Activated B cell treated with CpG ODN at 0.5 μM for 24 hours (primary cell): ENCODE measurements at regions of chr18 and their contacts with region 1.

Region 1: DNA sequence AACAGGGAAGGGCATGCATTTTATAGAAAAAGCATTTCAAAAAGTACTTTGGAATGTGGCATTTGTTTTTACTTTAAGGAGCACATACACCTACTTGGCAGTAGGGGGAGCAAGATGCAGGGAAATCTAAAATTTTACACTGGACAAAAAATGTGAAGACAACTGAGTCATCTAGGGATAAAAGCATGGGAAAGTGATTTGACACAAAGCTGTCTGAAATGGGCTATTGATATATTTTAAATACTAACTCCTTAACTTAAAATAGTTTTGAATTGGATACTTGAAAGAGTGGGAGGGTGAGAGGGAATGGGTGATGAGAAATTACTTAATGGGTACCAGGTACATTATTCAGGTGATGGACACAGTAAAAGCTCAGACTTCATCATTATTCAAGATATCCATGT is 15.8 kb downstream of the TMEM200C start:
- DNase-seq: no peak
- ATAC-seq: peak; percentile 34
- H3K4me3 Mint-ChIP-seq: no peak overlapping the region
- H3K27ac Mint-ChIP-seq: no peak overlapping the region
- H3K4me1 Mint-ChIP-seq: no peaks in the 10 kb centered on the region
- H3K27me3 Mint-ChIP-seq: peaks cover 7% of the 10 kb centered on the region
- CTCF ChIP-seq: peak; percentile 82

Region 2: GRCh38 chr18:6219116-6219717 is 339.7 kb after region 1 on chr18:
- CTCF ChIA-PET with region 1: no interaction called
- POLR2A ChIA-PET with region 1: no interaction called
- intact Hi-C with region 1: loop called (anchors 2 kb)
- DNase-seq: no peak
- ATAC-seq: no peak
- H3K4me3 Mint-ChIP-seq: no peak overlapping the region
- H3K27ac Mint-ChIP-seq: no peak overlapping the region
- H3K4me1 Mint-ChIP-seq: no peaks in the 10 kb centered on the region
- H3K27me3 Mint-ChIP-seq: no peaks in the 10 kb centered on the region
- CTCF ChIP-seq: no peak

Region 3: DNA sequence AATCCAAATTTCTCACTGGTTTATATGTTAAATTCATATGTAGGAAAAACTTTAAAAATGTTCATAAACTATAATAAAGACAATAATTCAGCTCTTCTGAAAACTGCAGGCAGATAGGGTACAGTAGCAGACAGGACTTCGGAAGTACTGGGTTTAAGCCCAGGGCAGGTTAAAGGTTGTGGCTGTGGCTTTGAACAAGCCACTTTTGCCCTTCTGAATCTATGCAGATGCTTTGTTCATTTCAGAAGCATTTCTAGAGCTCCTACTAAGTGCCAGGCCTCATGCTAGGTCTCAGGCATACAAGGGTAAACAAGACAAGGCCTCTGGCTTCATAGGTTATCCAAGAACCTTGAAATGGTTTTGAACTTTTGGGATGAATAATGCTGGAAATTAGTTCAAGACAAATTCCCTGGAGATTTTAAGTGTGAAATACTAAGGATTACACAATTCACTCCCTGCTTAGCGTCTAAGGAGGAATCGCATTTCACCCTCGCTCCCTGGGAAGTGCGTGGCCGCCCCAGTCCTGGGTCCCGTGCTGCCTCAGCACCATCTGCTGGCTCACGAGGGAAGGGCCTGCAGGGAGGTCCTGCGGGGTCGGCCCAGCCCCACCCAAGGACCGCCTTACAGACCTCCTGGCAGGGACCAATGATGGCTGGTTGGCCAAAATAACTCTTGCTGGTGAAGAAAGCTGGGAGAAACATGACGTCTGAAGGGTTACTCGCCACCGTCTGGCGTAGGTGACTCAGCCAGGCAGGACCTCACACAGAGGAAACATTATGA is 602.9 kb after region 1 on chr18:
- CTCF ChIA-PET with region 1: interaction called, 10 read pairs
- POLR2A ChIA-PET with region 1: no interaction called
- intact Hi-C with region 1: loop called (anchors 1 kb)
- DNase-seq: peak; percentile 18
- ATAC-seq: peak; percentile 42
- H3K4me3 Mint-ChIP-seq: no peak overlapping the region
- H3K27ac Mint-ChIP-seq: no peak overlapping the region
- H3K4me1 Mint-ChIP-seq: no peaks in the 10 kb centered on the region
- H3K27me3 Mint-ChIP-seq: peaks cover 4% of the 10 kb centered on the region
- CTCF ChIP-seq: no peak

Region 4: GRCh38 chr18:6521795-6522418 is 642.4 kb after region 1 on chr18:
- CTCF ChIA-PET with region 1: interaction called, 6 read pairs
- POLR2A ChIA-PET with region 1: no interaction called
- intact Hi-C with region 1: loop called (anchors 1 kb)
- DNase-seq: no peak
- ATAC-seq: no peak
- H3K4me3 Mint-ChIP-seq: no peak overlapping the region
- H3K27ac Mint-ChIP-seq: no peak overlapping the region
- H3K4me1 Mint-ChIP-seq: no peaks in the 10 kb centered on the region
- H3K27me3 Mint-ChIP-seq: peaks cover 3% of the 10 kb centered on the region
- CTCF ChIP-seq: no peak